Activated CD4-positive, alpha-beta memory T cell treated with anti-CD3 and anti-CD28 coated beads, Interleukin-2, amount 10 ng/mL, durations not matched to agents 7 days and 5 days (primary cell): ENCODE measurements at regions of chr15 and their contacts with region 1.

Region 1: DNA sequence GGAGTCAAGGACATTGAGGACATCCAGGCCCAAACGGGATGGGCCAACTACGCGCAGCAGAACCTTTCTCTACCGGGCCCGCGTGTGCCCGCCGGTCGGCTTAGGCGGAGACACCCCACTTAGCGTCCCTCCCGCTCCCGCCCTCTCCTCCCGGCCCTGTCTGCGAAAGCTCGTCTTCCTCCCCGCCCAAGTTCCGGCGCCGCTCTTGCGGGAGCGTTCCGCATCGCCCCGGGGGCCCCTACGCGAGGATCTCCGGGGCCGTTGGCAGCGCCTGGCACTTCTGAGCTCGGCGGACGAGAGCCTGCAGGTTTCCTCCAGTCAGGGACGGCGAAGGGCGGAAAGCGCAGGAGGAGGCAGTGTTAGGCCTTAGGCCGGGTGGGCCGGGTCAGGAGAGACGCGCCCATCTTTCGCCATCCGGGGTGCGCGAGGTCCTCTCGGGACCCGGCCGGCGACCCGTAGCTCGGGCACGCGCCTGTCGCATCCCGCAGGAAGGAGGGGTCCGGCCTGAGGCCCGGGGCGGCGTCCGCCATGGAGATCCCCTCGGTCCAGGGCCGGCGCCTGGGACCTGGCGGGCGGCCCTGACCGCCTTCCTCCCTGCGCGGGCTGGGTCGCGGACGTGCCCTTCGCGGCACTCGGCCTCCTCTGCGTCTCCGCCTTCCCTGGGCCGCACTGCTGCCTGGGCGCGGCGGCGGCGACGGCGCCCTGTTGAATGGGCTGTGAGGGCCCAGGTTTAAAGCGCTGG is at the start of gene FEM1B:
- DNase-seq: peak; percentile 89
- H3K4me3 Mint-ChIP-seq: peak within 1 kb of the TSS; percentile 99
- H3K27ac Mint-ChIP-seq: peak within 1 kb of the TSS; percentile 95
- H3K4me1 Mint-ChIP-seq: peaks cover 47% of the 10 kb centered on the region
- H3K27me3 Mint-ChIP-seq: no peaks in the 10 kb centered on the region
- total RNA-seq, gene FEM1B: 46.9 to 48.8 TPM

Region 2: DNA sequence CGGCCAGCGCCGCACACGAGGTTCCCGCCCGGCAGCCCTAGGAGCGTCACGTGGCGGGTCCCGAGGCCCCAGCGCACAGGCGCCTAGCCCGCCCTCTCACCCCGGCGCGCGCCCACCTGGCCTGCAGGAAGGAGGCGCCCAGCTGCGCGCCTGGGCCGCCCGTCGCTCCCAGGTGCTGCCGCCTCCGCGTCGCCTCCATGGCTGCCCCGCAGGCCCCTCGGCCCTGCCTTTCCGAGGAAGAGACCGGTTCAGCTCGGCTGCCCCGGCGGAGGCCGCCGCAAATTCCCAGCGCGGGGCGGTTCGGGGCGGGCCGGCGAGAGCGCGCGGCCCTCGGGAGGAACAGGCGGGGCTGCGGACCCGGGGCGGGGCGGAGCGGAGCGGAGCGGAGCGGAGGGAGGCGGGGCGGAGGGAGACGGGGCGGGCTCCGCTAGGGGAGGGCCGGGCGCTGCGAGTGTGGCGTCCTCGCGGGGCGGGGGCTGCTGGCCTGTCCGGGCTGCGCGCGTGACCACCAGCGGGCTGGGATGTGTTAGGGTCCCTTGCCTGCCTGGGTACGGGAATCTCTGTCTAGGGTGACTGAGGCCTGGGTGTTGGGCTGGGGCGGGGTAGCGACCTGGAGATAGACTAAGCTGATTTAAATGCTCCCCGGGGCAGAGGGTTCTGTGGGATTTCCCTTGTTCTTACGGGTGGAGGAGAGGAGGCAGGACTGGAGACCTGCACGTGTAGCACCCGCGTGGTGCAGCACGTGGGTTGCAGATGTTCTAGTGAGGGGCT is 48.2 kb before region 1 on chr15 and contains the start of gene CLN6:
- CTCF ChIA-PET with region 1: interaction called, 4 read pairs
- POLR2A ChIA-PET with region 1: interaction called, 95 read pairs
- DNase-seq: peak; percentile 83
- H3K4me3 Mint-ChIP-seq: peak within 1 kb of the TSS; percentile 93
- H3K27ac Mint-ChIP-seq: peak within 1 kb of the TSS; percentile 74
- H3K4me1 Mint-ChIP-seq: peaks cover 39% of the 10 kb centered on the region
- H3K27me3 Mint-ChIP-seq: no peaks in the 10 kb centered on the region
- total RNA-seq, gene CLN6: 40.0 to 41.3 TPM

Region 3: DNA sequence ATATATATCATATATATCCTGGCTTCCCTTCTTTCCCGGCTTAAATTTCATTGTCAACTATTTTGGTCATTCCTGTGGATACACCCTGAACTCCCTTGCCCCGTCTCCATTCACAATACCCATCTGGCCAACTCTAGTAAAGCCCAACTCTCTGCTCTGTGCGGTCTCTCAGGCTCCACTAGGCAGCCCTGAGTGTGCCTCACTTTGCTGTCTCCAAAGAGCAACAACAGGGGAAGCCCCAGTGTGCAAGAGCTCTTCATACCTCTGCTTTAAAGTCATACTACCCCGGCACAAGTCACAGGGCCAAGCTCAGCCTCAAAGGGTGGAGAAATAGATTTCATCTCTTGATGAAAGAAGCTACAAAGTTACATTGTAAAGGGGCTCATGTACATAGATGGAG is 19.1 kb before region 1 on chr15:
- CTCF ChIA-PET with region 1: interaction called, 8 read pairs
- POLR2A ChIA-PET with region 1: interaction called, 13 read pairs
- DNase-seq: no peak
- H3K4me3 Mint-ChIP-seq: no peak overlapping the region
- H3K27ac Mint-ChIP-seq: no peak overlapping the region
- H3K4me1 Mint-ChIP-seq: peaks cover 5% of the 10 kb centered on the region
- H3K27me3 Mint-ChIP-seq: peaks cover 20% of the 10 kb centered on the region

Region 4: DNA sequence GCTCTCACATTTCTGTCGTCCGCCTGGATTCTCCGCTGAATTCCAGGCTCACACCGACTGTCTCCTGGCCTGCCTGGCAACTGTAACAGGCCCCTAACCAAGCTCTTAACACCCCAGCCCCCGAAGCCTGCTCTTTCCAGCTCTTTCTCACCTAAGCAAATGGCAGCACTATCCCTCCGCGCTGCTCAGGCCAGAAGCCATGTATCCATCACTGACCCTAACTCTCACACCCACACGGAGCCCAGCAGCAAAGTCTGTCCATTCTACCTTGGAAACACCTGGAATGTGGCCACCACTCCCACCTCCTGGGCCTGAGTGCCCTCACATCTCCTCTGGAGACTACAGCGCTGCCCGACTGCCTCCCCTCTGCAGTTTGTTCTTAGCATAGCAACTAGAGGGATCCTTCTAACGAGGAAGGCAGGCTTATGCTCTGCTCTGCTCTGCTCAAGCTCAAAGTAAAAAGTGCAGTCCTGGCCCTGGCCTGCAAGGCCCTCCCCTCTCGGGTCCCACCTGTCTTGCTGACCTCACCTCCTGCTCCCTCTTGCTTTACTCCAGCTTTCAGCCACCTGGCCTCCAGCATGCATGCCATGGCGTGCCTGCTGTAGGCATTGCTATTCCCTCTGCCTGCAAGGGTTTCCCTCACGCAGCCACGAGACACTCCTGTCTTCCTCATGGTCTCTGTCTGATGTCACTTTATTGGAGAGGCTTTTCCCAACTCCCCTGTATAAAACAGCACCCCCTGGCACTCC is 27.0 kb after region 1 on chr15:
- CTCF ChIA-PET with region 1: interaction called, 7 read pairs
- POLR2A ChIA-PET with region 1: interaction called, 41 read pairs
- DNase-seq: peak; percentile 9
- H3K4me3 Mint-ChIP-seq: no peak overlapping the region
- H3K27ac Mint-ChIP-seq: no peak overlapping the region
- H3K4me1 Mint-ChIP-seq: peaks cover 9% of the 10 kb centered on the region
- H3K27me3 Mint-ChIP-seq: peaks cover 7% of the 10 kb centered on the region

Region 5: GRCh38 chr15:68363353-68363752 is 85.6 kb after region 1 on chr15:
- CTCF ChIA-PET with region 1: no interaction called
- POLR2A ChIA-PET with region 1: no interaction called
- DNase-seq: no peak
- H3K4me3 Mint-ChIP-seq: no peak overlapping the region
- H3K27ac Mint-ChIP-seq: no peak overlapping the region
- H3K4me1 Mint-ChIP-seq: peaks cover 17% of the 10 kb centered on the region
- H3K27me3 Mint-ChIP-seq: peaks cover 6% of the 10 kb centered on the region